MCF 10A (cell line): ENCODE measurements at regions of chr1 and their contacts with region 1.

Region 1: GRCh38 chr1:155250633-155251449 is 4.4 kb downstream of the ENTREP3 start:
- DNase-seq: peak; percentile 94
- H3K4me3 Mint-ChIP-seq: no peak overlapping the region
- H3K27ac Mint-ChIP-seq: no peak overlapping the region
- H3K4me1 Mint-ChIP-seq: peaks cover 19% of the 10 kb centered on the region
- H3K27me3 Mint-ChIP-seq: no peaks in the 10 kb centered on the region
- CTCF ChIP-seq: peak; percentile 100

Region 2: DNA sequence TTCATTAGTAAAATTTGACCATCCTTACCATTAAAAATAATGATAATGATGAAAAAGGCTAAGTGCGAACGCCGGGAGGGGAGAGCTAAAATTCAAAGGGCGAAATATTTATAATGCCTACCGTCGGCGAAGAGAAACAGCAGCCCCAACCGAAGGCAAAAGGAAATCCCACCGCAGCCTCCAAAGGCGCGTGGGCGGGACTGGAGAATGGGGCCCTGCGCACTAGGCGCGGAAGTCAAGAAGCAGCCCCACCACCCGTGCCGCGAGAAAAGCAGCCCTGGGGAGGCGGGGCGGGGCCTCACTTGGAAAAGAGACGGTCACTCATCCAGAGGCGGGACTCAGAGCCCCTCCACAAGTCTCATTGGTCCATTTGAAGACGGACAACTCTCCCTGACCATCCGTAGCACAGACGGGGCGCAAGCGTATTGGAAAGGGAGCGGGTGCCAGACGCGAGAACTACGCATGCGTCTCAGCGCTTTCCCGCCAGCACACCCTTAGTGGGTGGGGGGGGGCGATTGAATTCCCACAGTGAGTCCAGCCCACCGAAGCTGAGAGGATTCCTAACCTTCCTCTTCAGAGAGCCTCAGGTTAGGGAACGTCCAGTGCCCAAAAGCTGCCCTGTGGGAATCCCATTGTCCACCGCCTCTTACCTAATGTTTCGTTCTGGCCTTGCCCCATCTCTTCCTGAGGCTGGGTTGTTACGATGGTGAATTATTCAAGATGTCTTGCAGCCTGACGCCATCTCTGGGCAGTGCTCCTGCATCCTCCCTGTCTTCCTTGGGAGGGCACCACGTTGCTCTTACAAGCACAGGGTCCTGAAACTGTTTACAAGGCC is 23.4 kb before region 1 on chr1:
- CTCF ChIA-PET with region 1: interaction called, 53 read pairs
- POLR2A ChIA-PET with region 1: interaction called, 34 read pairs
- intact Hi-C with region 1: no loop called
- DNase-seq: peak; percentile 100
- H3K4me3 Mint-ChIP-seq: peak overlapping the region; percentile 85
- H3K27ac Mint-ChIP-seq: peak overlapping the region; percentile 89
- H3K4me1 Mint-ChIP-seq: peaks cover 34% of the 10 kb centered on the region
- H3K27me3 Mint-ChIP-seq: no peaks in the 10 kb centered on the region
- CTCF ChIP-seq: no peak

Region 3: DNA sequence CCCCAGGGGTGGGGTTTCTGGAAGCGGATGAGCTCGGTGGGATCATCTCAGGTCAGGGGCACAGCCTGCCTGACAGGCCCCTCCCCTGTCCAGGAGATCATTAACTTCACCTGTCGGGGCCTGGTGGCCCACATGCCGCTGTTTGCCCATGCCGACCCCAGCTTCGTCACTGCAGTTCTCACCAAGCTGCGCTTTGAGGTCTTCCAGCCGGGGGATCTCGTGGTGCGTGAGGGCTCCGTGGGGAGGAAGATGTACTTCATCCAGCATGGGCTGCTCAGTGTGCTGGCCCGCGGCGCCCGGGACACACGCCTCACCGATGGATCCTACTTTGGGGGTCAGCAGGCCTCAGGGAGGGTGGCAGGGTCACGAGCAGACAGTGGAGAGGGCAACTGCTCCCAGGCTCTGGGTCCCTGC is 34.8 kb after region 1 on chr1:
- CTCF ChIA-PET with region 1: interaction called, 10 read pairs
- POLR2A ChIA-PET with region 1: no interaction called
- intact Hi-C with region 1: no loop called
- DNase-seq: no peak
- H3K4me3 Mint-ChIP-seq: no peak overlapping the region
- H3K27ac Mint-ChIP-seq: no peak overlapping the region
- H3K4me1 Mint-ChIP-seq: no peaks in the 10 kb centered on the region
- H3K27me3 Mint-ChIP-seq: no peaks in the 10 kb centered on the region
- CTCF ChIP-seq: no peak

Region 4: GRCh38 chr1:155339515-155340097 is 88.8 kb after region 1 on chr1:
- CTCF ChIA-PET with region 1: interaction called, 17 read pairs
- POLR2A ChIA-PET with region 1: no interaction called
- intact Hi-C with region 1: no loop called
- DNase-seq: no peak
- H3K4me3 Mint-ChIP-seq: no peak overlapping the region
- H3K27ac Mint-ChIP-seq: no peak overlapping the region
- H3K4me1 Mint-ChIP-seq: no peaks in the 10 kb centered on the region
- H3K27me3 Mint-ChIP-seq: no peaks in the 10 kb centered on the region
- CTCF ChIP-seq: no peak

Region 5: GRCh38 chr1:155596864-155597263 is 346.0 kb after region 1 on chr1:
- CTCF ChIA-PET with region 1: interaction called, 23 read pairs
- POLR2A ChIA-PET with region 1: no interaction called
- intact Hi-C with region 1: no loop called
- DNase-seq: no peak
- H3K4me3 Mint-ChIP-seq: no peak overlapping the region
- H3K27ac Mint-ChIP-seq: no peak overlapping the region
- H3K4me1 Mint-ChIP-seq: peaks cover 11% of the 10 kb centered on the region
- H3K27me3 Mint-ChIP-seq: no peaks in the 10 kb centered on the region
- CTCF ChIP-seq: no peak